Calu3 (cell line): ENCODE measurements at regions of chr5 and their contacts with region 1.

Region 1: GRCh38 chr5:140073296-140073695 is 30.2 kb upstream of the NRG2 start:
- DNase-seq: no peak
- H3K4me3 Mint-ChIP-seq: no peak overlapping the region
- H3K27ac Mint-ChIP-seq: no peak overlapping the region
- H3K4me1 Mint-ChIP-seq: peaks cover 8% of the 10 kb centered on the region
- H3K27me3 Mint-ChIP-seq: peaks cover 25% of the 10 kb centered on the region
- CTCF ChIP-seq: peak; percentile 43

Region 2: DNA sequence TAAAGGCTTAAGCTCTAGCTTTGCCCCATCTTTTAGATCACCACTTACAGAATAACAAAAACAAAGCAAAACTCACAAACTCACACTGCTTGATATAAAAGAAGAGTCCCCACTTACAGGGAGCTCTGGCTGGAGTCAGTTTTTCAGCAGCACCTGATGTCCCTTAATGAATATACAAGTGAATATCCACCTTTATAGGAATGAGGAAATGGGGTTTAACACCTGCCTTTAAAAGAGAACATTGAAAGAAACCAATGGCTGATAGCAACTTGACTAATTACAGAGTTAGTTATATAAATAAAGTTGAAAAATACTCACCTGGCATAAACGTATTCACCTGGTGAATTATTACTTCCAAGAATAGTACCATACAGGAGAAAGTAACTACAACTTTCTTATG is 19.9 kb after region 1 on chr5:
- CTCF ChIA-PET with region 1: no interaction called
- intact Hi-C with region 1: no loop called
- DNase-seq: no peak
- H3K4me3 Mint-ChIP-seq: no peak overlapping the region
- H3K27ac Mint-ChIP-seq: no peak overlapping the region
- H3K4me1 Mint-ChIP-seq: no peaks in the 10 kb centered on the region
- H3K27me3 Mint-ChIP-seq: peaks cover 34% of the 10 kb centered on the region
- CTCF ChIP-seq: no peak

Region 3: DNA sequence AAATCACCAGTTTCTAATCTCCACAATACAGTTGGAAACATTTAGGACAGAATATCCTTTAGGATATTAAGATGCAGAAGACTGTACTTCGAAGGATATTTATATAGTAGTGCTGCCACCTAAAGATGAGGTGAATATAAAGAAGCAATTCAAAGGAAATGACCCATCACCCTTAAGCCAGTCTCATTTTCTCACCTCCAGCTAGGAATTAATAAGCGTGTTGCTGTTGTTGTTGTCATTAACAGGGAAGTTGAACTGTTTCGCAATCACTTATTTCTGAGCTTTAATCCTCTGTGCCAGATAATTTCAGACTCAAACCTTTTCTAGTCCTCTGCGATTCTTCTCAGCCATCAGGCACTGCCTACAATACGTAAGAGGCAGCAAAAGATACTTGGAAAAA is 32.8 kb after region 1 on chr5:
- CTCF ChIA-PET with region 1: interaction called, 3 read pairs
- intact Hi-C with region 1: loop called (anchors 1 kb)
- DNase-seq: no peak
- H3K4me3 Mint-ChIP-seq: no peak overlapping the region
- H3K27ac Mint-ChIP-seq: no peak overlapping the region
- H3K4me1 Mint-ChIP-seq: peaks cover 22% of the 10 kb centered on the region
- H3K27me3 Mint-ChIP-seq: peaks cover 42% of the 10 kb centered on the region
- CTCF ChIP-seq: no peak

Region 4: DNA sequence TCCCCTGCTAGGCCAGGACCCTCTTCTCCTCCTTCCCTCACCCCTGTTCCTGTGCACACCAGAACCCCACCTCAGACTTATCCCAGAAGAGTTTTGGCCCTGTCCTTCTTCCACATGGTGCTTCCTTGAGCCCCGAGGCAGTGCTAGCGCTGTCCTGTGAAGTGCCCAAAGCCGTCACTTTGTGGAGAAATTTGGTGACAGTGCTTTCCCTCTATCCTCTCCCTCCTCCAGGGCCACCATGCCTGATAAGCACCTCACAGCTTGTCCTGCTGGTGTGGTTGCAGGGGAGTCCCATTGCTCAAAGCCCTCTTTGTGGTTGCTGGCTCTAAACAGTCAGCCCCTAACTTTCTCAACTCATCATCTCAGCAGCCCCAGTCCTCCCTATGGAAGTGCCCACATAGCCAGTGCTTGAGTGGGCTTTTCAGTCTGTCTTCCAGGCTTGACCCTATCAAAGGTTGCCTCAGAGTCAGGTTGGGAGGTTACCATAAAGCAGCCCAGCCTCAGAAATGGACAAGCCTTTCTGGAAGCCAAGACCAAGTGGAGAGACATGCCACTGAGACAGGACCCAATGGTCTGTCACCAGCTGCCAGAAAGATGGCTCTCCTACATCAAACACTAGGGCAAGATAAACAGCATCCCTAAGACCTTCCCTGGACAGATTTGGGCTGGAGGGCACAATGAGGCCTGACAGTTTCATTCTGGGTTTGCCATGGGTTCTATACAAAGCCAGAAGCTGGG is 70.4 kb after region 1 on chr5:
- CTCF ChIA-PET with region 1: interaction called, 11 read pairs
- intact Hi-C with region 1: loop called (anchors 1 kb)
- DNase-seq: no peak
- H3K4me3 Mint-ChIP-seq: no peak overlapping the region
- H3K27ac Mint-ChIP-seq: no peak overlapping the region
- H3K4me1 Mint-ChIP-seq: peaks cover 15% of the 10 kb centered on the region
- H3K27me3 Mint-ChIP-seq: peaks cover 39% of the 10 kb centered on the region
- CTCF ChIP-seq: no peak

Region 5: DNA sequence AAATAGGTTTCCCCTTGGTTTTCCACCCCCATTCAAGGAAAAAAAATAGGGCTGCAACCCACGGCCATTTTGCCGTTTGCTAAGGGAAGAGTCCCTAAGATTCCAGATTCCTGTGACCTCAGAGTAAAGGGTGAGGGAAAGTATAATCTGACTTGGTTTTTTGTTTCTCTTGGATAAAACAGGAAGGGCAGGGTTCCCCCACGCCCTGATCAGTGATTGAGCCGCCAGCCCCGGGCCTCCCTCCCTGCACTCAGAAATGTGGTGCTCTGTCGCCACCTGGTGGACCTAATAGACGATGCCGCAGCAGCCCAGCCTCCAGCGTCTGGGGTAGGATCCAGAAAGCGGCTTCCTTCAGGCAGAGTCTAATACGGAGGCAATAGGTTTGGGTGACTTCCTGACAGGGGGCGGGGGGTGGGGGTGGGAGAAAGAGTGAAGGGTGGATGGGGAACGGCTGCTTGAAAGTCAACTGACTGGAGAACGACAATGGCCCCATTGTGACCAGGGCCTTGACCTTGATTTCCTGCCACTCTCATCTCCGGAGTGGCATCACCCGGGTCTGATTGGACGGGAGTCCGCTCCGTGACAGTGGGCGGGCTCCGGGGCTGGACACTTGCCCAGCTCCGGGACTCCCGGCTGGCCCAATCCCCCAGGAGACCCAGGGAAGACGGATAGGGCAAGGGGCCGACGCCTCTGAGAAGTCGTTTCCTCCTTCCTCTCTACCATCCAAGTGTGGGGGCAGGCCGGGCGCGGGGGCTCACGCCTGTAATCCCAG is 83.9 kb after region 1 on chr5:
- CTCF ChIA-PET with region 1: interaction called, 4 read pairs
- intact Hi-C with region 1: loop called (anchors 1 kb)
- DNase-seq: peak; percentile 94
- H3K4me3 Mint-ChIP-seq: peak overlapping the region; percentile 64
- H3K27ac Mint-ChIP-seq: peak overlapping the region; percentile 59
- H3K4me1 Mint-ChIP-seq: peaks cover 4% of the 10 kb centered on the region
- H3K27me3 Mint-ChIP-seq: no peaks in the 10 kb centered on the region
- CTCF ChIP-seq: peak; percentile 92

Region 6: GRCh38 chr5:140357726-140358093 is 284.4 kb after region 1 on chr5:
- CTCF ChIA-PET with region 1: interaction called, 3 read pairs
- intact Hi-C with region 1: loop called (anchors 5 kb)
- DNase-seq: peak; percentile 90
- H3K4me3 Mint-ChIP-seq: peak overlapping the region; percentile 41
- H3K27ac Mint-ChIP-seq: peak overlapping the region; percentile 38
- H3K4me1 Mint-ChIP-seq: peaks cover 17% of the 10 kb centered on the region
- H3K27me3 Mint-ChIP-seq: no peaks in the 10 kb centered on the region
- CTCF ChIP-seq: peak; percentile 90